Calu3 (cell line): ENCODE measurements at regions of chr1 and their contacts with region 1.

Region 1: DNA sequence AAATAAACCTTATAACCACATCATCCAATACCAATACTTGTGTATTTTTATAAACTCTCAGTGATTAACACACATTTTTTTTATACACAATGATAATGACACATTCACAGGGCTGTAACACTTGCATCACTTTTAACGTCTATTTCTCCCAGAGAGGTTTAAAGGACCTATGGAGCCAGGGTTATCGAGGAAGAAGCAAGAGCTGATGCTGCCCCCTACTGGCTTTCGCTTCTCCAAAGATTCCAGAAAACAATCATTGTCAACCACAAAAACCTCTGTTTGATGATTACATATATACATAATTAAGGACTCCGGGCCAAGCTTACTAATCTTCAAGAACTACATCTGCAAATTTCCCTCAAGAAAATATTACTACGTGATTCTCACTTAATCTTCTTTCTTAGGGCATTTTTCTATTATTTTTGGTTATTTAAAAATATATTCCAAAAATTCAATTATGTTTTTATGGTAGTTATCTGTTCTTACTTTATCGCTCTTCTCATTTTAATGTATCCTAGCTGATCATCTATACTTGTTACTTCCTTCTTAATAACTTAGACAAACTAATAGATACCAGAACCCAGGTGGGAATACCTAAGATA is 214.5 kb downstream of the VAV3 start:
- DNase-seq: peak; percentile 67
- H3K4me3 Mint-ChIP-seq: no peak overlapping the region
- H3K27ac Mint-ChIP-seq: no peak overlapping the region
- H3K4me1 Mint-ChIP-seq: no peaks in the 10 kb centered on the region
- H3K27me3 Mint-ChIP-seq: no peaks in the 10 kb centered on the region
- CTCF ChIP-seq: peak; percentile 54

Region 2: GRCh38 chr1:107277022-107277421 is 473.4 kb before region 1 on chr1:
- CTCF ChIA-PET with region 1: no interaction called
- intact Hi-C with region 1: loop called (anchors 2 kb)
- DNase-seq: peak; percentile 22
- H3K4me3 Mint-ChIP-seq: no peak overlapping the region
- H3K27ac Mint-ChIP-seq: no peak overlapping the region
- H3K4me1 Mint-ChIP-seq: no peaks in the 10 kb centered on the region
- H3K27me3 Mint-ChIP-seq: no peaks in the 10 kb centered on the region
- CTCF ChIP-seq: no peak

Region 3: GRCh38 chr1:107529502-107530149 is 220.8 kb before region 1 on chr1:
- CTCF ChIA-PET with region 1: interaction called, 4 read pairs
- intact Hi-C with region 1: loop called (anchors 5 kb)
- DNase-seq: peak; percentile 9
- H3K4me3 Mint-ChIP-seq: no peak overlapping the region
- H3K27ac Mint-ChIP-seq: no peak overlapping the region
- H3K4me1 Mint-ChIP-seq: no peaks in the 10 kb centered on the region
- H3K27me3 Mint-ChIP-seq: no peaks in the 10 kb centered on the region
- CTCF ChIP-seq: peak; percentile 38

Region 4: GRCh38 chr1:107669996-107670395 is 80.5 kb before region 1 on chr1:
- CTCF ChIA-PET with region 1: interaction called, 12 read pairs
- intact Hi-C with region 1: loop called (anchors 2 kb)
- DNase-seq: peak; percentile 76
- H3K4me3 Mint-ChIP-seq: peak overlapping the region; percentile 51
- H3K27ac Mint-ChIP-seq: peak overlapping the region; percentile 90
- H3K4me1 Mint-ChIP-seq: peaks cover 56% of the 10 kb centered on the region
- H3K27me3 Mint-ChIP-seq: no peaks in the 10 kb centered on the region
- CTCF ChIP-seq: no peak

Region 5: GRCh38 chr1:108000620-108001111 is 250.2 kb after region 1 on chr1:
- CTCF ChIA-PET with region 1: no interaction called
- intact Hi-C with region 1: no loop called
- DNase-seq: no peak
- H3K4me3 Mint-ChIP-seq: no peak overlapping the region
- H3K27ac Mint-ChIP-seq: no peak overlapping the region
- H3K4me1 Mint-ChIP-seq: no peaks in the 10 kb centered on the region
- H3K27me3 Mint-ChIP-seq: peaks cover 13% of the 10 kb centered on the region
- CTCF ChIP-seq: no peak